ENCODE measurements at regions of chr12 and their contacts with region 1.

Region 1: GRCh38 chr12:9464408-9464807 is 143.3 kb downstream of the KLRB1 start:
- DNase-seq: no peak
- ATAC-seq: no peak
- H3K4me3 Mint-ChIP-seq: no peak overlapping the region
- H3K27ac Mint-ChIP-seq: no peak overlapping the region
- H3K4me1 Mint-ChIP-seq: peaks cover 16% of the 10 kb centered on the region
- H3K27me3 Mint-ChIP-seq: no peaks in the 10 kb centered on the region

Region 2: DNA sequence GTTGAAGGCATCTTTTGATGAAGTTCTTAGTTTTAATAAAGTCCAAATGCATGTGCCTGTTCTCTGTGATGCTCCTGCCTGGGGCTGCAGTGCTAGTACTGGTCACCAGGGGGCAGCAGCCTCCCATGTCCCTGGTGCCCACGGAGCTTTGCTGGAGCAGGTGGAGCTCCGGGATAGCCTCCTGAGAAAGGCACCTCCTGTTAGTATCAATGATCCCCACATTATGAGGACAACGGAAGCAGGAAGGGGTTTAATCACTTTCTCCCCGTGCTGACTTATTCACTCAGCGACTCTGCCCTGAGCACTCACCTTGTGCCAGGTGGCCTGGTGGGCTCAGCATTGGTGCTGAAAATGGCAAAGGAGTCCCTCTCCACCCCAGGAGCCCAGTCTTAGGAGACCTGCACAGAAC is 133.2 kb before region 1 on chr12:
- CTCF ChIA-PET with region 1: interaction called, 14 read pairs
- DNase-seq: peak; percentile 81
- ATAC-seq: peak; percentile 78
- H3K4me3 Mint-ChIP-seq: no peak overlapping the region
- H3K27ac Mint-ChIP-seq: peak overlapping the region; percentile 41
- H3K4me1 Mint-ChIP-seq: peaks cover 38% of the 10 kb centered on the region
- H3K27me3 Mint-ChIP-seq: no peaks in the 10 kb centered on the region